ENCODE measurements at regions of chr18 and their contacts with region 1.

Region 1: GRCh38 chr18:35343936-35344735 is at the start of gene ZNF24:
- DNase-seq: peak; percentile 93 to 94
- ATAC-seq: peak; percentile 85 to 95 (median 87)
- H3K4me3 ChIP-seq: peak within 1 kb of the TSS; percentile 99
- H3K4me3 Mint-ChIP-seq: peak within 1 kb of the TSS; percentile 99
- H3K27ac ChIP-seq: peak within 1 kb of the TSS; percentile 99
- H3K27ac Mint-ChIP-seq: peak within 1 kb of the TSS; percentile 98 to 100
- H3K4me1 ChIP-seq: peaks cover 15% of the 10 kb centered on the region
- H3K4me1 Mint-ChIP-seq: peaks cover 46 to 47% of the 10 kb centered on the region in 2 donors
- H3K27me3 ChIP-seq: no peaks in the 10 kb centered on the region
- H3K27me3 Mint-ChIP-seq: peaks cover 0 to 3% of the 10 kb centered on the region in 2 donors
- CTCF ChIP-seq: no peak
- total RNA-seq, gene ZNF24: 50.4 to 63.9 (median 58.2) TPM

Region 2: DNA sequence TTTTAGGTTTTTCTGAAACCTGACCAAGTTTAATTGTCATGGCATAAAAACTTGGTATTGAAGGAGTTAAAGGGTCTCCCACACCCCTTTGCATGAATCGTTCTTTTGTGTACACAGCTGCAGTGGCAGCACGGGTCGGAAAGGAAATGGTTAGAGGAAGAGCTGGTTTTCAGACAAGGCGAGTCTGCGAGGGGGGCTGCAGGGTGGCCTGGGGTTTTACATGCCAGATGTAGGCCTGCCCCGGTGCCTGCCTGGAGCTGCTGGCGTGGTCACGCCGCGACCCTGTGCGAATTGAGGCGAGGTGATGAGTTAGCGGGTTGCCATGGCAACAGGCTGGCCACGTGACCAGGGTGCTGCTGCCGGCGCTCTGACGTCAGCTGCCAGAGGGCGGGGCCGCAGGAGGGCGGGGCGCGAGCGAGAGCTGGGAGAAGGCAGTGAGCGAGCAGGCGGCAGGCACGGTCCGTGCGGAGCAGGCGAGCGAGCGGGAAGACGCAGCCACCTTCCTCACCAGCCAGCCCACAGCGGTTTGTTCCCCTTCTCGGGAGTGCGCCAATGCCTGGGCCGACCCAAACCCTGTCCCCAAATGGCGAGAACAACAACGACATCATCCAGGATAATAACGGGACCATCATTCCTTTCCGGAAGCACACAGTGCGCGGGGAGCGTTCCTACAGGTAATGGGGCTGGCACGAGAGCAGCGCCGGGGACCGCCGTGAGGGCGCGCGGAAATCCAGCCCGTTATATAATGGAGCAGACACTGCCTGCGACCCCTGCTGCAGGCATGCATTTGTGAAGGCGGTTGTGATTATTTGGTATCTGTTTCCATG is 302.9 kb before region 1 on chr18 and contains the start of gene MAPRE2:
- intact Hi-C with region 1: loop called (anchors 1 kb)
- DNase-seq: peak; percentile 100
- ATAC-seq: peak; percentile 73 to 94 (median 89)
- H3K4me3 ChIP-seq: peak within 1 kb of the TSS; percentile 77
- H3K4me3 Mint-ChIP-seq: peak within 1 kb of the TSS; percentile 96
- H3K27ac ChIP-seq: peak within 1 kb of the TSS; percentile 93
- H3K27ac Mint-ChIP-seq: peak within 1 kb of the TSS; percentile 98 to 99
- H3K4me1 ChIP-seq: peaks cover 43% of the 10 kb centered on the region
- H3K4me1 Mint-ChIP-seq: peaks cover 89 to 93% of the 10 kb centered on the region in 2 donors
- H3K27me3 ChIP-seq: no peaks in the 10 kb centered on the region
- H3K27me3 Mint-ChIP-seq: peaks cover 0 to 4% of the 10 kb centered on the region in 2 donors
- CTCF ChIP-seq: no peak
- total RNA-seq, gene MAPRE2: 159 to 283 (median 207) TPM

Region 3: DNA sequence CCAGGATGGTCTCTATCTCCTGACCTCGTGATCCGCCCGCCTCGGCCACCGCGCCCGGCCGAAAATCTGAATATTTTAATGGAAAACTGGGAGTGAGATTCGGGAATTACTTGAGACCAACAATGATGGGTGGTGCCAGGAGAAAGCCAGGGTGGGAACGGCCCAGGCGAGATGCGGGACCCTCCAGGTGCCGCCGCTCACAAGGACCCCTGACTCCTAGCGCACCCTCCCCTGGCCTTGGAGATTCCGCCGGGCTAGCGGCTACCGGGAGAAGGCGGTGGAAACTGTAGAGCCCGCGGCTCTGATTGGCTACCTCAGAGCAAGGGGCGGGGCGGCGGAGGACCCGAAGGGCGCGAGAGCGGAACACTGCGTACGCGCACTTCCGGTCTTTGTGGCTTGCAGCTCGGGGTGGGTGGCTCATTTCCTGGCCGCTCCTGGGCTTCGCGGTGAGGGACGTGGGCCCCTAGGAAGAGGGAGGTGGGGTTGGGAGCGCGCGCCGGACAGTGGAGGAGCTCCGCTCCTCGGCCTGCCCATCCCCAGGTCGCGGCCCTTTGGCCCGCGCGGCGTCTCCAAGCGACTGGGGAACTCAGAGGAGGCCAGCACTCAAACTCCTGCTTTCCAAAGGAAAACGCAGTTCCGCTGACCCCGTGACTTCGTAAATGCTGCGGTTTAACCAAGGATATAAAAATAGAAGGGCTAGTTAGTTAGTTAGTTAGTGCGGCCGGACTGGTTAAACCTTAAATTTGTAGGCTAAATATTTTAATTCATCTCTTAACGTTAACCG is 103.3 kb before region 1 on chr18 and contains the start of gene ZNF397:
- intact Hi-C with region 1: loop called (anchors 1 kb)
- DNase-seq: peak; percentile 95 to 97
- ATAC-seq: peak; percentile 96 to 99 (median 98)
- H3K4me3 ChIP-seq: peak within 1 kb of the TSS; percentile 60
- H3K4me3 Mint-ChIP-seq: peak within 1 kb of the TSS; percentile 97
- H3K27ac ChIP-seq: peak within 1 kb of the TSS; percentile 83
- H3K27ac Mint-ChIP-seq: peak within 1 kb of the TSS; percentile 97 to 98
- H3K4me1 ChIP-seq: peaks cover 4% of the 10 kb centered on the region
- H3K4me1 Mint-ChIP-seq: peaks cover 25 to 28% of the 10 kb centered on the region in 2 donors
- H3K27me3 ChIP-seq: no peaks in the 10 kb centered on the region
- H3K27me3 Mint-ChIP-seq: no peaks in the 10 kb centered on the region
- CTCF ChIP-seq: no peak
- total RNA-seq, gene ZNF397: 8.7 to 15.6 (median 13.9) TPM

Region 4: GRCh38 chr18:35290073-35290735 is 53.9 kb before region 1 on chr18 and contains the start of gene ZSCAN30:
- intact Hi-C with region 1: loop called (anchors 1 kb)
- DNase-seq: peak; percentile 95 to 97
- ATAC-seq: peak; percentile 93 to 99 (median 96)
- H3K4me3 ChIP-seq: peak within 1 kb of the TSS; percentile 61
- H3K4me3 Mint-ChIP-seq: peak within 1 kb of the TSS; percentile 99
- H3K27ac ChIP-seq: peak within 1 kb of the TSS; percentile 75
- H3K27ac Mint-ChIP-seq: peak within 1 kb of the TSS; percentile 97 to 98
- H3K4me1 ChIP-seq: peaks cover 17% of the 10 kb centered on the region
- H3K4me1 Mint-ChIP-seq: peaks cover 56 to 61% of the 10 kb centered on the region in 2 donors
- H3K27me3 ChIP-seq: no peaks in the 10 kb centered on the region
- H3K27me3 Mint-ChIP-seq: no peaks in the 10 kb centered on the region
- CTCF ChIP-seq: no peak
- total RNA-seq, gene ZSCAN30: 15.4 to 21.0 (median 16.4) TPM

Region 5: GRCh38 chr18:35497370-35498197 is 153.4 kb after region 1 on chr18 and contains the start of gene INO80C:
- intact Hi-C with region 1: loop called (anchors 5 kb)
- DNase-seq: peak; percentile 91 to 98
- ATAC-seq: peak; percentile 88 to 95 (median 90)
- H3K4me3 ChIP-seq: peak within 1 kb of the TSS; percentile 76
- H3K4me3 Mint-ChIP-seq: peak within 1 kb of the TSS; percentile 100
- H3K27ac ChIP-seq: peak within 1 kb of the TSS; percentile 93
- H3K27ac Mint-ChIP-seq: peak within 1 kb of the TSS; percentile 97 to 99
- H3K4me1 ChIP-seq: peaks cover 15% of the 10 kb centered on the region
- H3K4me1 Mint-ChIP-seq: peaks cover 20 to 25% of the 10 kb centered on the region in 2 donors
- H3K27me3 ChIP-seq: no peaks in the 10 kb centered on the region
- H3K27me3 Mint-ChIP-seq: peaks cover 0 to 7% of the 10 kb centered on the region in 2 donors
- CTCF ChIP-seq: no peak
- total RNA-seq, gene INO80C: 17.6 to 19.5 (median 19.2) TPM